ENCODE measurements at regions of chrX and their contacts with region 1.

Region 1: DNA sequence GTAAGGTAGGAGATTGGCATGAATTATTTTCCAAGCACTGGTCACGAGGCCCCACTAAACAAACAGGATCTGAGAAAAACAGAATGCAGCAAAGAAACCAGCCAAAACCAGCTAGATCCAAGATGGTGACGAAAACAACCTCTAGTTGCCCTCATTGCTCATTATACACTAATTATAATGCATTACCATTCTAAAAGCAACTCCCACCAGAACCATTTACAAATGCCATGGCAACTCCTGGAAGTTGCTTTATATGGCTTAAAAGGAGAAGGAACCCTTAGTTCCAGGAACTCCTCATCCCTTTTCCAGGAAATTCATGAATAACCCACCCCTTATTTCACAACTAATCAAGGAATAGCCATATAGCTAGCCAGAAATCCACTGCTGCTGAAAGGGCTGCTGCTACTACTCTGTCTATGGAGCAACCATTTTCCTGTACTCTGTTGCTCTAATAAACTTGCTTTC is 69.3 kb downstream of the ABCB7 start:
- DNase-seq: no peak
- H3K4me3 ChIP-seq: no peak overlapping the region
- H3K27ac ChIP-seq: no peak overlapping the region
- H3K4me1 ChIP-seq: no peaks in the 10 kb centered on the region
- H3K27me3 ChIP-seq: no peaks in the 10 kb centered on the region
- CTCF ChIP-seq: no peak
- POLR2A ChIP-seq: no peak

Region 2: DNA sequence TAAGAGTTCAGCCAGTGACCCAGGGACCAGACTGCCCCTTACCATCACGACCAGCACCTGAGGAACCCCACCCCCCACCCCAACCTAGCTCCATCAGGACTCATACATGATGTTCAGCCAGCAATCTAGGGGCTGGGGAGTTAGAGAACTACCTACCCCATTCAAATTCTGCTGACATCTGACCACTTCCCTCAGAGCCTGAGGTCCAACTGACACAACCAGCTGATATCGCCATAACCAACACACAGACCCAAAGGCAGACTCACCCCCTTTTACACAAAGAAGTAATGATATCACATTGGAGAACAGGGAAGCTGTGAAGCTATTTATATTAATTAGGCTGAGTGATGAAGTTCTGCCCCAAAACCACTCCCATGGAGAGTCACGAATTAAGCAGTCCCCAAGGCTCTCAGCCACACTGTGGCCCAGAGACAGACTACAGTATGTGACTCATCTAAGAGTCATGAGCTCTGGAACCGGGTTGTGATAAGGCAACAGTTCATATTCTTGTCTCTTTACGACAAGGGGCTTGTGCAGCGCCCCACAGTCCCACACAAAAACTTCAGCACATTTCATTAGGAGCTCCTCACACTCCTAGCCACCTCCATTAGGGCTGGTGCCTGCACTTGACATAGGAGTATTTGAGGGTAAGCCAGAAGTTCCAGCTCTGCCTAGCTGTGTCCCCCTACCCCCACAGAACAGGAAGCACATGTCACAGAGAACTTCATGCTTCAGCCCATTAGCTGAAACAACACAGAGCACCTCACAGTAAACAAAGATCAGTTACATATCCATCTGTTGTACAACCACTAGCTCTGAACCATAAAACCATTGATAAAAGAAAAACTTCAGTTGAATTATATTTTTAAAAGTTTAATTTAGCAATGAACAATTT is 967.5 kb before region 1 on chrX:
- CTCF ChIA-PET with region 1: no interaction called
- POLR2A ChIA-PET with region 1: no interaction called
- dilution Hi-C with region 1: no loop called
- intact Hi-C with region 1: no loop called
- DNase-seq: peak; percentile 16
- H3K4me3 ChIP-seq: no peak overlapping the region
- H3K27ac ChIP-seq: peak overlapping the region; percentile 3
- H3K4me1 ChIP-seq: peaks cover 3% of the 10 kb centered on the region
- H3K27me3 ChIP-seq: no peaks in the 10 kb centered on the region
- CTCF ChIP-seq: no peak
- POLR2A ChIP-seq: no peak

Region 3: DNA sequence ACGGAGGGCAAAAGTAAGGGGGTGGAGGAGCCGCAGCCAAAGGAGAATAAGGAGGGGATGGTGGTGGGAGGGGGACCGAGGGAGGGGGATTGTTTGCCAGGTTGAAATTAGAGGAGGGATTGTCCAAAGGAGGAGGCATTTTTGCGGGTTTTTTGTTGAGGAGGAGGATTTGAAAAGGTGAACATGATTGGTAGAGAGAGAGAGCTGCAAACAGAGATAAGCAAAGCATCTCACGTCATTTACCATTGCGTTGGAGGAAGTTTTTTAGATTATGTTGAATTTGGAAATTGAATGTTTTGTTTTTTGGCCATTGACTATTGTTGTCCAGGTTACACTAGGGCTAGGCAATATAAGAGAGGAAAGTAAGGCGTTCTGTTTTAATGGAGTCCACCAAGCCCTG is 123.8 kb after region 1 on chrX:
- CTCF ChIA-PET with region 1: no interaction called
- POLR2A ChIA-PET with region 1: no interaction called
- dilution Hi-C with region 1: no loop called
- intact Hi-C with region 1: no loop called
- DNase-seq: no peak
- H3K4me3 ChIP-seq: no peak overlapping the region
- H3K27ac ChIP-seq: no peak overlapping the region
- H3K4me1 ChIP-seq: no peaks in the 10 kb centered on the region
- H3K27me3 ChIP-seq: no peaks in the 10 kb centered on the region
- CTCF ChIP-seq: no peak
- POLR2A ChIP-seq: no peak

Region 4: DNA sequence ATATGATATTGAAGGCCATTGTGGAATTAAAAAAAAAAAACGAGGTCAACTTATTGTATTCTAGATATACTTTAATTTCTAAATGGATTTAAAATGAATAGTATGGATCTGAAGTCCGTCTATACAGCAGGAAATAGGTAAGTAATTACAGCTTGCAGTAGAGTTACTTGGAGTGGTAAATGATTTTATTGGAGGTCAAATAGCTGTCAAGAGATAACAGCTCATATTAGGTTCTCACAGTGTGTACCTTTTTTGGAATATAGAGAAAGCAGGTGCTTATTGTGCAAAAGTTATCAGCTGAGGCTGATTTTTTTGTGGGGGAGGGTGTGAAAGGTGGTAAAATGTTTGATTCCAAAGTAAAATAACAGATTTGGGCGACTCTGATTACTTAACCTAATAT is 204.8 kb after region 1 on chrX:
- CTCF ChIA-PET with region 1: no interaction called
- POLR2A ChIA-PET with region 1: no interaction called
- dilution Hi-C with region 1: no loop called
- intact Hi-C with region 1: loop called (anchors 10 kb)
- DNase-seq: no peak
- H3K4me3 ChIP-seq: no peak overlapping the region
- H3K27ac ChIP-seq: no peak overlapping the region
- H3K4me1 ChIP-seq: no peaks in the 10 kb centered on the region
- H3K27me3 ChIP-seq: no peaks in the 10 kb centered on the region
- CTCF ChIP-seq: no peak
- POLR2A ChIP-seq: no peak

Measured in endothelial cell of umbilical vein (primary cell).